ENCODE measurements at regions of chr3 and their contacts with region 1.

Region 1: GRCh38 chr3:136075218-136075808 is 109.8 kb downstream of the PPP2R3A start:
- DNase-seq: peak in 8 of 10 donors; percentile 25 to 93 (median 74)

Region 2: GRCh38 chr3:135310317-135310716 is 765.0 kb before region 1 on chr3:
- intact Hi-C with region 1: no loop called
- DNase-seq: no peak

Region 3: GRCh38 chr3:136196401-136197158 is 121.3 kb after region 1 on chr3:
- intact Hi-C with region 1: loop called (anchors 5 kb)
- DNase-seq: peak; percentile 93 to 99 (median 96)

Region 4: DNA sequence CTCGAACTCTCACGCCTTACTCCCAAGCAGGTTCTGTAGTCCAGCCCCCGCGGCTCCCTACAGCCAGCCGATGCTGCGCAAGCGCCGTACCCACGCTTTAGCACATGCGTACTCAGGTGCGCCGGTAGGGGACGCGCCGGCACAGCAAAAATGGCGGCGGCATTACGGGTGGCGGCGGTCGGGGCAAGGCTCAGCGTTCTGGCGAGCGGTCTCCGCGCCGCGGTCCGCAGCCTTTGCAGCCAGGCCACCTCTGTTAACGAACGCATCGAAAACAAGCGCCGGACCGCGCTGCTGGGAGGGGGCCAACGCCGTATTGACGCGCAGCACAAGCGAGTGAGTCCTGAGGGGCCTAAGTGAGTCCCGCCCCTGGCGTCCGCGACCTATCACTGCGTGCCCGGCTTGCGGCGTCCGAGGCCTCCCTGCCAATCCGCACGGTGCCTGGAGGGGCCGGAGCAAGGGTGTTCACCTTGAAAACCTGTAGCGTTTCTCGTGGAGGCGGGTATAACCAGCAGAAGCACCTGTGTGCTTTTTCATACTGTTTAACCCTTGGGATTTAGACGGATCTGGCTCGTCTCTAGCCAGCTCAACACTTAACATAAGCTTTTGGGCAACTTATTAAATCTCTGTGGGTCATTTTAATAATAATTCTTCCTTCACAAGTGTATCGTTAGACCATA is 175.1 kb after region 1 on chr3 and contains the start of gene PCCB:
- intact Hi-C with region 1: loop called (anchors 1 kb)
- DNase-seq: peak; percentile 83 to 99 (median 90)

Region 5: GRCh38 chr3:136297826-136298225 is 222.5 kb after region 1 on chr3:
- intact Hi-C with region 1: no loop called
- DNase-seq: no peak

Region 6: DNA sequence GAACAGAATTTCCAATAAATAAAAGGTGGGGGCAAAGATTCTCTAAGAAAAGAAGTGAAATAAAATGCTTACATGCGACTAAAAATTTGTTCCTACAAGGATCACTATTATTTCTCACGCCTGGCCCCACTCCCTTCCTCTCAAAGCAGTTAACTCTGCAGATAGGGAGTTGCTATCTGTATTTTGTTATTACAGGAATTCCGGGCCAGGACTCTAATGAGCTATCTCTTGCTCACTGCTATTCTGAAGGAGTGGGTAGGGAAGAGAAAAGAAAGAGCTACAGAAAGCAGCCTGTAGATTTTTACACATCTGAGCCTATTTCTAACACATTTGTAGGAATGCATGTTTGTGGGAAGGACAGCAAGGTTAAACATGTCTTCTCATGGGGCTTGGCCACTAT is 315.3 kb after region 1 on chr3:
- intact Hi-C with region 1: loop called (anchors 2 kb)
- DNase-seq: no peak

Region 7: GRCh38 chr3:136545664-136546268 is 470.5 kb after region 1 on chr3:
- intact Hi-C with region 1: loop called (anchors 5 kb)
- DNase-seq: no peak

Region 8: GRCh38 chr3:136772709-136773108 is 697.4 kb after region 1 on chr3:
- intact Hi-C with region 1: no loop called
- DNase-seq: no peak

Region 9: DNA sequence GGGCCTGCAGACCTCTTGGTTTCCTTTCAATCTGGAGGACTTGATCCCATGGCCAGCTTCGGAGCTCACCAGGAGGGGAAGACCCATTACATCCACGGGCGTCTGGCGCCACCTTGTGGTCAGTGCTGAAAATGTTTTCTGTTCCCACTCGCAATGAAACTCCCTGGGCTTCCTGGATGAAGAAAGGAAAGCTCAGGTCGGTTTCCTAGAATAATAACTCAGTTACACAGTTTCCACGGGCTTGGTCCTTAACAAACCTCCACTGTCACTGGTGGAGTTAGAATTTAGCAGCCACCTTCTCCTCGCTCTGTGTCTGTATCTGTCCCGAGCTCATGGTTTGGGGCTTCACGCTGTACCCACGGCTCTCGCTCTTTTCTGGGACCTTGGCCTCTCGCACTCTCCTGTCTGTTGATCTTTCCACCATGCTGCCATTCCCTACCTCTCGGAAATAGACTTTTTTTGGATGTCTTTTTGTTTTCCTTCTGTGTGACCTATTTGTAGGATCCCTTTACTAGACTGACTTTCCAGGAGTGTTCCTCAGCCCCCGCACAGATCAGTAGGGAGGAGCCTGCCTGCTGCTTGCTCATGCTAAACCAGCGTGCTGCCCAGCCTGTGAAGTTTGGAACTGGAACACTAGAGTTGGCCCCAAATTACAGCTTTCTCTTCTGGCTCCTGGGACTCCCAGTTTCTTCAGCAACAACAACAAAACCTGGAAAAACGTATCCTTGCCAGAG is 938.8 kb after region 1 on chr3:
- intact Hi-C with region 1: loop called (anchors 2 kb)
- DNase-seq: peak; percentile 81 to 99 (median 96)